Activated CD4-positive, alpha-beta memory T cell treated with anti-CD3 and anti-CD28 coated beads for 36 hours (primary cell): ENCODE measurements at regions of chr5 and their contacts with region 1.

Region 1: GRCh38 chr5:170597109-170597751 is 93.4 kb downstream of the KCNIP1 start:
- DNase-seq: peak; percentile 77
- H3K4me3 Mint-ChIP-seq: no peak overlapping the region
- H3K27ac Mint-ChIP-seq: no peak overlapping the region
- H3K4me1 Mint-ChIP-seq: peaks cover 19% of the 10 kb centered on the region
- H3K27me3 Mint-ChIP-seq: peaks cover 57% of the 10 kb centered on the region

Region 2: DNA sequence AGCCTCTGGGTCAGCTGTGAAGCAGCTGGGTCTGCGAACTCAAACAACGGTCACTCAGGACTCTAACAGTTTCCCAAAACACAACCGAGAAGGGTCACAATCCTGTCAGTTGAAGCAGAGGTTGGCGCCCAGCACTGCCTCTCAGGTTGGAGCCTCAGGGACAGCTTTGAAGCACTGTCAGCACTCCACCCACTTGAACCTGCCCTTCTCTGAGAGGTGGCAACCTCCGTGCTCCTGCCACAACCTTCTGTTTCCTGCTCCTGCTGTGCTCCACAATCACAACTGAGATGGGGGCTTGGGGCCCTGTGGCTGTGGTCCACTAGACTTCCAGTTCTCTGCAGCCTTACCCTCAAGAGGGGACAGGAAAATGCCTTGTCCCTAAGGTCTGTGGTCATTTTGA is 277.9 kb before region 1 on chr5:
- CTCF ChIA-PET with region 1: no interaction called
- POLR2A ChIA-PET with region 1: no interaction called
- intact Hi-C with region 1: no loop called
- DNase-seq: no peak
- H3K4me3 Mint-ChIP-seq: no peak overlapping the region
- H3K27ac Mint-ChIP-seq: no peak overlapping the region
- H3K4me1 Mint-ChIP-seq: peaks cover 15% of the 10 kb centered on the region
- H3K27me3 Mint-ChIP-seq: no peaks in the 10 kb centered on the region

Region 3: DNA sequence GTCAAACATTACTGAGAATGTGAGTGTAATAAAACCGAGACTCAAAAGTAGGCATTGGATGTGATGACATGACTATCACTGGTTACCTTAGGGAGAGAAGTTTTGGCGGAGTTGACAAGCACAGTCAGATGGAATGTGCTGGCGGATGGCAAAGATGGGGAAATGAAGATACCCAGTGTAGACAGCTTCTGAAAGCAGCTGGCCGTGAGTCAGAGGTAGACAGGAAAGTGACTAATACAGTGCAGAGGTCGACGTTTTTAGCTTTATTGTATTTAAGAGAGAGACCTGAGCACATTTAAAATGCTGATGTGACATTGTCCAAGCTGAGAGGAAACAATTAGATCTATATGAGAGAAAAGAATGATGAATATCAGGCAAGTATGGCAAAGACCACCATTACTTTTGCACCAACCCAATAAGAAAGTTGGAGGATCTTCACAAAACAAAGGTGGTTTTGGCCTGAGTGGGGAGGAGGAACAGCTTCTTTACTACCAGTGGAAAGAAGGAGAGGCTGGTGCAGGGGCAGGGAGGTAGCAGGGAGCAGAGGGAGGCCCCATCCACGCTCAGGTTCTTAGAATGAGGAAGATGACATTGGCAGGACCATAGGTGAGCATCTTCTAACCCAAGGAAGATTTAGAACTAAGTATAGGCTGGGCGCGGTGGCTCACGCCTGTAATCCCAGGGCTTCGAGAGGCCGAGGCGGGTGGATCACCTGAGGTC is 130.1 kb before region 1 on chr5:
- CTCF ChIA-PET with region 1: interaction called, 3 read pairs
- POLR2A ChIA-PET with region 1: interaction called, 7 read pairs
- intact Hi-C with region 1: loop called (anchors 1 kb)
- DNase-seq: peak; percentile 81
- H3K4me3 Mint-ChIP-seq: no peak overlapping the region
- H3K27ac Mint-ChIP-seq: no peak overlapping the region
- H3K4me1 Mint-ChIP-seq: no peaks in the 10 kb centered on the region
- H3K27me3 Mint-ChIP-seq: peaks cover 9% of the 10 kb centered on the region

Region 4: GRCh38 chr5:172164769-172165212 is 1567.6 kb after region 1 on chr5:
- CTCF ChIA-PET with region 1: no interaction called
- POLR2A ChIA-PET with region 1: no interaction called
- intact Hi-C with region 1: no loop called
- DNase-seq: no peak
- H3K4me3 Mint-ChIP-seq: no peak overlapping the region
- H3K27ac Mint-ChIP-seq: peak overlapping the region; percentile 67
- H3K4me1 Mint-ChIP-seq: peaks cover 75% of the 10 kb centered on the region
- H3K27me3 Mint-ChIP-seq: no peaks in the 10 kb centered on the region